ENCODE measurements at regions of chr9 and their contacts with region 1.

Region 1: GRCh38 chr9:131739980-131740648 is at the start of gene RAPGEF1:
- DNase-seq: peak; percentile 57 to 66
- H3K4me3 ChIP-seq: peak within 1 kb of the TSS in 2 of 3 donors; percentile 35 to 53
- H3K27ac ChIP-seq: peak within 1 kb of the TSS; percentile 55 to 89 (median 84)
- H3K4me1 ChIP-seq: peaks cover 8 to 29% of the 10 kb centered on the region in 2 donors
- H3K27me3 ChIP-seq: no peaks in the 10 kb centered on the region
- CTCF ChIP-seq: peak; percentile 45 to 99 (median 78)
- POLR2A ChIP-seq: no peak
- total RNA-seq, gene RAPGEF1: 39.6 to 52.5 (median 44.9) TPM

Region 2: DNA sequence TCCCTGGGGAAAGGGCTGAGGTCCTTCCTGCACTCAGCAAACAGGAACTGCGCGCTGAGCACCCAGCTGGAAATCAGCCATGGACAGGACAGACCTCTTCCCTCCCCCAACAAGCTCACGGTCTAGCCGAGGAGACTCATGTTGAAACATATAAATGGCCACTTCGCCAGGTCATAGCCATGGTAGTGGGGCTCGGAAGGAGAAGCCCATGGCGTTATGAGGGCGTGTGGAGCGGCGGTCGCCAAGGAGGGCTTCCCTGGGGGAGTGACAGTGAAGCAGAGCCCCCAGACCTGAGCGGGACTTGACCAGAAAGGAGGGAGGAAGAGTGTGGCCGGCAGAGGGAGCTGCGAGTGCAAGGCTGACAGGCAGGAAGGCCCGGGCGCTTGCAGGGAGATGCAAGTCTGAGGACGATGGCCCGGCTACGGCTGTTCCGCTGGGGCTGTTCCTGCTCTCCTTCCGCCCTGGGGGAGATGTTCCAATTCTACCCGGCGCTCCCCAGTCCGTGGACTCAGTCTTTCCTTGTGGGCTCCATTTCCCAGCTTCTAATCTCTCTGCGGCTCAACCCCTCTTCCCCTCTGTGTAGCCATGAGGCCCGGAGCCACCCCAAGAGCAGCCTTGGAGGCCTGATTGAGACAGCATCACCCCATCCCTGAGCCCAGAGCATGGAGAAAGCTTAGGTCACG is 390.1 kb before region 1 on chr9:
- intact Hi-C with region 1: loop called (anchors 10 kb)
- DNase-seq: peak; percentile 90 to 94
- H3K4me3 ChIP-seq: peak overlapping the region in 1 of 3 donors; percentile 6
- H3K27ac ChIP-seq: no peak overlapping the region
- H3K4me1 ChIP-seq: peaks cover 0 to 9% of the 10 kb centered on the region in 2 donors
- H3K27me3 ChIP-seq: no peaks in the 10 kb centered on the region
- CTCF ChIP-seq: peak; percentile 70 to 94 (median 86)
- POLR2A ChIP-seq: no peak

Region 3: DNA sequence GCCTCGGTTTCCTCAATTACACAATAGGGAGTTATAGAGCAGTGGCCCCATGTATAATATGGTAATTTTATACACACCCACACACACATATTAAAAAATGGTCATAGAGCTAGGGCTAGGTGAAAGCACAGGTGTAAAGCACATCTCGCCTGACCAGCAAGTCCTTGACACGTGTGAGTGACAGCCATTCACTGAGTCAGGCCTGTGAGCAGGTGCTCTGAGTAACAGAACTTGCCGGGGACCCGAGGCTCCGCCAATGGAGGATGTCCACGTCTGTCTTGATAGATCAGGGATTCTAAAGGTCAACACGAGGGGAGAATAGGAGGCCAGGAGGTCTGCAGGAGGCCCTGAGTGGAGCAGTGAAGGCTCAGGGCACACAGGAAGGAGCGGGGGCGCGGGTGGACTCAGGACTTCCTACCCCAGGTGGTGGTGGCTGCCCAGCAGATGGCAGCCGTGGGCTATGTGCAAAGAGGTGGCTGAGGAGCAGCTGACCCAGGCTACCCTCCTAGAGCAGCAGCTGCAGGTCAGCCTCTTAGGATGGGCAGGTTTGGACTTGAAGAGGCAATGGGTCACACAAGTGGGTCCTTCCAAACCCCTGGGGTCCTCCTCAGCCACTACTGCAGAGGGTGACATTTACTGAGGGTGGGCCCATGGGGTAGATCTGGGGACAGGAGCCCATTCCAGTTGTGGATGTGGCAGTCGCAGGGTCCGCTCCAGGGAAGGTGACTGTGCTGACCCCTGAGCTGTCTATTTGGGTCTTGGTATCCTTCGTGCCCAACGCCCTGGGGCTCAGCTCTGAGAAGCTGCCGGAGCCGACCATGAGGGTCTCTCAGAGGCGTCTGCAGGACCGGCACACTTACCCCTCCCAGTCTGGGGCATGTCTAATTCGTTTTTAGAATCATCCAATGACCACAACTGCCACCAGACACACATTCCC is 148.9 kb before region 1 on chr9:
- intact Hi-C with region 1: loop called (anchors 2 kb)
- DNase-seq: peak; percentile 84
- H3K4me3 ChIP-seq: no peak overlapping the region
- H3K27ac ChIP-seq: no peak overlapping the region
- H3K4me1 ChIP-seq: no peaks in the 10 kb centered on the region
- H3K27me3 ChIP-seq: no peaks in the 10 kb centered on the region
- CTCF ChIP-seq: peak; percentile 52 to 99 (median 88)
- POLR2A ChIP-seq: no peak

Region 4: GRCh38 chr9:131608493-131609037 is 131.5 kb before region 1 on chr9:
- intact Hi-C with region 1: loop called (anchors 5 kb)
- DNase-seq: peak; percentile 94 to 97
- H3K4me3 ChIP-seq: no peak overlapping the region
- H3K27ac ChIP-seq: peak overlapping the region; percentile 85 to 92 (median 89)
- H3K4me1 ChIP-seq: peaks cover 19 to 26% of the 10 kb centered on the region in 2 donors
- H3K27me3 ChIP-seq: no peaks in the 10 kb centered on the region
- CTCF ChIP-seq: no peak
- POLR2A ChIP-seq: peak in 1 of 2 donors; percentile 43

Measured in thyroid gland (tissue), 4 donors.